ENCODE measurements at regions of chr12 and their contacts with region 1.

Region 1: DNA sequence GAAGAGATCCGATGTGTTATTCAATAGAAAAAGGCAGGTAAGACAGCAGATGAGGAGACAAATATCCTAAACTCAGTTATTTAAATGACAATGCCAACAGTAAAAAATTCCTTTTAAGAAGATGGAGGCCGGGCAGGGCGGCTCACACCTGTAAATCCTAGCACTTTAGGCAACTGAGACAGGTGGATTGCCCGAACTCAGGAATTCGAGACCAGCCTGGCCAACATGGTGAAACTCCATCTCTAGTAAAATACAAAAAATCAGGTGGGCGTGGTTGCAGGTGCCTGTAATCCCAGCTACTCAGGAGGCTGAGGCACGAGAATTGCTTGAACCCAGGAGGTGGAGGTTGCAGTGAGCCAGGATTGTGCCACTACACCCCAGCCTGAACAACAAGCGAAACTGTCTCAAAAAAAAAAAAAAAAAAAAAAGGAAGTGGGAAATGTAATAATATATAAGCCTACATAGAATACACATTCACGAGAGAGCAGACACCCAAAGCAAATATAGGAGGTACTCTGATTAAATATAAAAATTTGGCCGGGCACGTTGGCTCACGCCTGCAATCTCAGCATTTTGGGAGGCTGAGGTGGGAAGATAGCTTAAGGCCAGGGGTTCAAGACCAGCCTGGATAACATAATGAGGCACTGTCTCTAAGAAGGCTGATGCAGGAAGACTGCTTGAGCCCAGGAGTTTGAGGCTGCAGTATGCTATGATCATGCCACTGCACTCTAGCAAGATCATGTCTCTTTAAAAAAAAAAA is 19.0 kb downstream of the CORO1C start:
- DNase-seq: no peak
- ATAC-seq: peak; percentile 73
- H3K4me3 Mint-ChIP-seq: peak overlapping the region; percentile 64
- H3K27ac Mint-ChIP-seq: peak overlapping the region; percentile 56
- H3K4me1 Mint-ChIP-seq: peaks cover 60% of the 10 kb centered on the region
- H3K27me3 Mint-ChIP-seq: no peaks in the 10 kb centered on the region
- CTCF ChIP-seq: no peak

Region 2: DNA sequence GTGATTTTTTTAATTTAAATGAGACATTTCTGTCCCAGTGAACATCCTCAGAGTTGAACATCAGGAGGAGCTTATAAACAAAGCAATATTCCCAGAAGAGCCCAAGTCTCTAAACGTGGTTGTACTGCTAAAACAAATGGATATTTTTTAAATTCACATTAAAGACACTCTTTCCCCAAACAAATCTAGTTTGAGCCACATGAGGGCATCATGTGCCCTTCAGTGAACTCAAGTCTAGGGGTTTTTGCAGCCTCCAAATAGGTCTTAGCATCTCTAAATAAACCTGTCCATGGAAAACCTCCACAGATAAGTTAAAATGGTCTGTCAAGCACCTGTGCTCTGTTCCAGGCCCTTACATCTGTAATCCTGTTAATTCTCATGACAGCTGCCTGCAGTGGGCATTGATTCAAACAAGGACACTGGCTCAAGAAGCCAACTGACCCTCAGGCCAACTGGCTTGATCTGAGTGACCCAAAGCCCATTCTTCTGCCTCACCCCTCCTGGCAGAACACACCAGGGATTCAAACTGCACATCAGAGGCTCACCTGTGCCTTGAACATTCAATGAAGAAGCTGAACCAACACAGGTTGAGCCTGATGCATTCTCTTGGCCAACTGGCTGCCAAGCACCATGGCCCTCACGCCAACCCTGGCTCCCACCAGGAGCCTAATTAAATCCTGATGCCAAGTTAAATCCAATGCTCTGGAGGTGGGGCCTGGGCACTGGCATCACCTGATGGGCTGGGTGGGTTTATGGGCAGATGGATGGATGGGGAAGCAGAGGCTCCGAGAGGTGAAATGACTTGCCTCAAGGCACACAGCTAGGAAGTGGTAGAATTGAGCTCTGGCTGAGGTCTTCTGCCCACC is 141.4 kb before region 1 on chr12:
- CTCF ChIA-PET with region 1: no interaction called
- POLR2A ChIA-PET with region 1: interaction called, 11 read pairs
- intact Hi-C with region 1: no loop called
- DNase-seq: no peak
- ATAC-seq: no peak
- H3K4me3 Mint-ChIP-seq: no peak overlapping the region
- H3K27ac Mint-ChIP-seq: peak overlapping the region; percentile 97
- H3K4me1 Mint-ChIP-seq: peaks cover 87% of the 10 kb centered on the region
- H3K27me3 Mint-ChIP-seq: no peaks in the 10 kb centered on the region
- CTCF ChIP-seq: no peak

Region 3: GRCh38 chr12:108691175-108691997 is 21.0 kb before region 1 on chr12:
- CTCF ChIA-PET with region 1: interaction called, 4 read pairs
- POLR2A ChIA-PET with region 1: interaction called, 5 read pairs
- intact Hi-C with region 1: loop called (anchors 2 kb)
- DNase-seq: peak; percentile 28
- ATAC-seq: peak; percentile 84
- H3K4me3 Mint-ChIP-seq: peak overlapping the region; percentile 77
- H3K27ac Mint-ChIP-seq: peak overlapping the region; percentile 89
- H3K4me1 Mint-ChIP-seq: peaks cover 54% of the 10 kb centered on the region
- H3K27me3 Mint-ChIP-seq: no peaks in the 10 kb centered on the region
- CTCF ChIP-seq: no peak

Region 4: GRCh38 chr12:108724054-108724889 is 11.9 kb after region 1 on chr12:
- CTCF ChIA-PET with region 1: no interaction called
- POLR2A ChIA-PET with region 1: interaction called, 3 read pairs
- intact Hi-C with region 1: loop called (anchors 1 kb)
- DNase-seq: no peak
- ATAC-seq: peak; percentile 71
- H3K4me3 Mint-ChIP-seq: no peak overlapping the region
- H3K27ac Mint-ChIP-seq: peak overlapping the region; percentile 78
- H3K4me1 Mint-ChIP-seq: peaks cover 65% of the 10 kb centered on the region
- H3K27me3 Mint-ChIP-seq: no peaks in the 10 kb centered on the region
- CTCF ChIP-seq: no peak

Region 5: GRCh38 chr12:108757856-108758255 is 45.5 kb after region 1 on chr12:
- CTCF ChIA-PET with region 1: no interaction called
- POLR2A ChIA-PET with region 1: no interaction called
- intact Hi-C with region 1: no loop called
- DNase-seq: no peak
- ATAC-seq: no peak
- H3K4me3 Mint-ChIP-seq: no peak overlapping the region
- H3K27ac Mint-ChIP-seq: no peak overlapping the region
- H3K4me1 Mint-ChIP-seq: no peaks in the 10 kb centered on the region
- H3K27me3 Mint-ChIP-seq: no peaks in the 10 kb centered on the region
- CTCF ChIP-seq: no peak